ENCODE measurements at regions of chr11 and their contacts with region 1.

Region 1: DNA sequence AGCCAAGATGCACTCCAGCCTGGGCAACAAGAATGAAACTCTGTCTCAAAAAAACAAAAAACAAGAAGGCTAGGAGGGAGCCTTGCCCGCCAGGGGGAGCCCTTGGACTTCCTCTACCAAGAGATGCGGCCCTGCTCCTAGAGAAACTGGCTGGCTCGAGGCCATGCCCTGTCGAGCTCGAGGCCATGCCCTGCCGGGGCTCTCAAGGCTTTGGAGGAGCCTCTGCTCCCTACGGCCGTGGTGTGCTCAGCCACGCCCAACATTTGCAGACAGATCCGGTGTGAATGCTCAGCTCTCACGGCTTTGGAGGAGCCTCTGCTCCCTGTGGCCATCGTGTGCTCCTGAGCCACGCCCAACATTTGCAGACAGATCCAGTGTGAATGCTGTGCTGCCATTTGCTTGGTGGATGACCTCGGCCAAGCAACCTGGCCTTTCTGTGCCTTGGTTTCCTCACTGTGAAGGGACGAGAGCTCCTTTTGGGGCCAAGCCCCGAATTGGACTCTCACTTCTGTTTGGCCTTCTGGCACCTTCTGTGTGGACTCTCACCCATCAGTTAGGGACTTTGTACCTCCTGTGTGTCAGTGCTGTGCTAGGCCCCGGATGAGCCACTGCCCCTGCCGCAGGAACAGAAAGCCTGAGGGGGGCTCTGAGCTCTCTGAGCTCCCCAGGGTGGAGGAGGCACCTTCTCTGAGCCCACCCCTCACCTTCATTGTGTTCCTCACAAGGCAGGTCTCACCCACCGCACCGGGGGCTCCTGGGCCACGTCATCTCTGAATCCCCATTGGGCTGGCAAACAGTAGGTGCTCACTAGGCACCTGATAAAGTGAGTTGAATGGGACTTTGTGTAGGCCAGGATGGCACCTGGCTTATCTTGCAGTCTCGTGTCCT is 14.1 kb downstream of the C11orf24 start:
- DNase-seq: peak; percentile 91 to 99 (median 97)
- H3K4me3 ChIP-seq: peak overlapping the region in 33 of 59 donors; percentile 2 to 57 (median 23)
- H3K27ac ChIP-seq: peak overlapping the region in 50 of 59 donors; percentile 0 to 85 (median 56)
- H3K27me3 ChIP-seq: no peaks in the 10 kb centered on the region
- CTCF ChIP-seq: peak; percentile 81 to 99 (median 93)

Region 2: GRCh38 chr11:68271781-68272608 is 14.3 kb after region 1 on chr11 and contains the start of gene C11orf24:
- intact Hi-C with region 1: loop called in 1 of 2 experiments (anchors 2 kb)
- DNase-seq: peak; percentile 88 to 98 (median 94)
- H3K4me3 ChIP-seq: peak within 1 kb of the TSS; percentile 67 to 98 (median 87)
- H3K27ac ChIP-seq: peak within 1 kb of the TSS; percentile 46 to 98 (median 93)
- H3K27me3 ChIP-seq: no peaks in the 10 kb centered on the region
- CTCF ChIP-seq: peak in 25 of 56 donors; percentile 4 to 54 (median 27)
- total RNA-seq, gene C11orf24: 12.6 to 56.0 (median 23.3) TPM

Region 3: GRCh38 chr11:68297812-68298658 is 40.3 kb after region 1 on chr11:
- intact Hi-C with region 1: loop called (anchors 1 to 2 kb)
- DNase-seq: peak; percentile 58 to 89 (median 65)
- H3K4me3 ChIP-seq: peak overlapping the region in 36 of 59 donors; percentile 5 to 51 (median 28)
- H3K27ac ChIP-seq: peak overlapping the region in 1 of 59 donors; percentile 13
- H3K27me3 ChIP-seq: no peaks in the 10 kb centered on the region
- CTCF ChIP-seq: peak; percentile 85 to 99 (median 97)

Region 4: DNA sequence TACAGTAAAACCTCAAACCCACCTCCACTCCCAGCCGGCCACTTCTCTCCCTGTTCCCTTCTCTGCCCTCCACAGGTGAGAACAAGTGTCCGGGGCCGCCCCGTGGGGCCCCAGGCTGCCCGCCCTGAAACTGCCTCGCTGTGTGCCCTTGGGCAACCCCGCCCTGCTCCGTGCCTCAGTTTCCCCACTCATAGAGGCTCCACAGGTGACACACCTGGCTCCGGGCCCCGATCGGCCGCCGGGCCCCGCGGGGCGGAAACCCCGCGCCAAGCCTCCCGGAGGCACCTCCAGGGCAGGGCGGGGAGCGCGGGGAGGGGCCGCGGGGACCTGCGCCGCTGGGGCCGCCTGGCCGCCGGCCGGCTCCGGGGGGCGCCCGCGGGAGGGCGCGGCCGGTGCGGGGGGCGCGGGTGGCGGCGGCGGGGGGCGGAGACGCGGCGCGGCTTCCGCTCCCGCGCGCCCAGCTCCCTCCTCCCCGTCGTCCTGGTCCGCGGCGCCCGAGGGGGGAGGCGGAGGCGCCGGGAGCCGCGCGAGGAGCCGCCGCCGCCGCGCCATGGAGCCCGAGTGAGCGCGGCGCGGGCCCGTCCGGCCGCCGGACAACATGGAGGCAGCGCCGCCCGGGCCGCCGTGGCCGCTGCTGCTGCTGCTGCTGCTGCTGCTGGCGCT is 54.5 kb after region 1 on chr11 and contains the start of gene LRP5:
- intact Hi-C with region 1: no loop called
- DNase-seq: no peak
- H3K4me3 ChIP-seq: peak within 1 kb of the TSS; percentile 26 to 74 (median 57)
- H3K27ac ChIP-seq: peak within 1 kb of the TSS in 5 of 59 donors; percentile 24 to 61 (median 26)
- H3K27me3 ChIP-seq: peaks cover 0 to 4% (median 0%) of the 10 kb centered on the region in 45 donors
- CTCF ChIP-seq: no peak
- total RNA-seq, gene LRP5: 4.5 to 21.7 (median 9.2) TPM

Region 5: GRCh38 chr11:68447015-68447801 is 189.5 kb after region 1 on chr11:
- intact Hi-C with region 1: loop called (anchors 5 kb)
- DNase-seq: peak; percentile 65 to 88 (median 74)
- H3K4me3 ChIP-seq: no peak overlapping the region
- H3K27ac ChIP-seq: no peak overlapping the region
- H3K27me3 ChIP-seq: no peaks in the 10 kb centered on the region
- CTCF ChIP-seq: peak; percentile 72 to 98 (median 93)

Measured in dorsolateral prefrontal cortex (tissue), 120 donors.